CD8-positive, alpha-beta memory T cell (primary cell): ENCODE measurements at regions of chr3 and their contacts with region 1.

Region 1: DNA sequence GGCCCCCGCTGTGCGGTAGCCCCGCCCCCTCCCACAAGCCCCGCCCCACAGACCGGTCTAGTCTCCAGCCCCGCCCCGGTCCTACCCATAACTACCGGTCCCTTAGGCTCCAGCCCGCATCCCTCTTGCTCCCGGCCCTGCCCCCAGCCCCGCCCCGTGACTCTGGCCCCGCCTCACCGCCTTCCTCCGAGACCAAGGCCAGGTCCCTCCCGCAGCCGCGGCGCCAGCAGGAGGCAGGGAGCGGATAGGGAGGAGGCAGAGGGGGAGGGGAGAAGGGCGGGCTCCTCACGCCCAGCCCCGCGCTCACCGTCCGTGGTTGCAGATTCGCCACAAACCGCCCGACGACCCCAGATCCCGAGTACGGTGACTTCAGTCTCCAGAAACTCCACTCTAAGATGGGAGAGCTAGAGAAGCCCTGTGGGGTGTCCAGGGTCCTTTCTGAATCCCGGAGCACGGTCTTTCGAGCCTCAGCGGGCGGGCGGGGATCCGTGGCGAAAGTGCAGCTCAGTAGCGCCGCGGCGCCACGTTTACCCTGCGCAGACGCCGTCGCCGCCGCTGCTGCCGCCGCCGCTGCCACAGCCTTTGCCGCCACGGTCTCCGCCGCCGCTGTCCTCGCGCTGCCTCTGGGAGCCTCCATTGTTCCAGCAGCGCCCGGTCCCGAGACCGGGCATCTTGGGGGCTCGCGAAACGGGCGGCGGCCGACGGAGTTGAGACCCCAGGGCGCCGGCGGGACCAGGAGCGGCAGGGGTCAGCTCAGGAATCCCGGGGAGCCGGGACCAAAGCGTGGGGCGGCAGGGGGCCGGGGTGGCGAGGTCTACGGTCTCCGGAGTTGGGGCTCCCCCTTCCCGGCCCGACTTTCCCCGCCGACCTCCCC is at the start of gene BRPF1:
- DNase-seq: peak; percentile 96 to 100 (median 99)
- H3K4me3 ChIP-seq: peak within 1 kb of the TSS; percentile 80
- H3K4me3 Mint-ChIP-seq: peak within 1 kb of the TSS; percentile 87 to 98 (median 95)
- H3K27ac ChIP-seq: peak within 1 kb of the TSS; percentile 85
- H3K27ac Mint-ChIP-seq: peak within 1 kb of the TSS; percentile 80 to 99 (median 97)
- H3K4me1 ChIP-seq: peaks cover 42% of the 10 kb centered on the region
- H3K4me1 Mint-ChIP-seq: peaks cover 51 to 71% (median 65%) of the 10 kb centered on the region in 3 donors
- H3K27me3 ChIP-seq: no peaks in the 10 kb centered on the region
- H3K27me3 Mint-ChIP-seq: no peaks in the 10 kb centered on the region
- total RNA-seq, gene BRPF1: 46.8 to 50.2 TPM

Region 2: DNA sequence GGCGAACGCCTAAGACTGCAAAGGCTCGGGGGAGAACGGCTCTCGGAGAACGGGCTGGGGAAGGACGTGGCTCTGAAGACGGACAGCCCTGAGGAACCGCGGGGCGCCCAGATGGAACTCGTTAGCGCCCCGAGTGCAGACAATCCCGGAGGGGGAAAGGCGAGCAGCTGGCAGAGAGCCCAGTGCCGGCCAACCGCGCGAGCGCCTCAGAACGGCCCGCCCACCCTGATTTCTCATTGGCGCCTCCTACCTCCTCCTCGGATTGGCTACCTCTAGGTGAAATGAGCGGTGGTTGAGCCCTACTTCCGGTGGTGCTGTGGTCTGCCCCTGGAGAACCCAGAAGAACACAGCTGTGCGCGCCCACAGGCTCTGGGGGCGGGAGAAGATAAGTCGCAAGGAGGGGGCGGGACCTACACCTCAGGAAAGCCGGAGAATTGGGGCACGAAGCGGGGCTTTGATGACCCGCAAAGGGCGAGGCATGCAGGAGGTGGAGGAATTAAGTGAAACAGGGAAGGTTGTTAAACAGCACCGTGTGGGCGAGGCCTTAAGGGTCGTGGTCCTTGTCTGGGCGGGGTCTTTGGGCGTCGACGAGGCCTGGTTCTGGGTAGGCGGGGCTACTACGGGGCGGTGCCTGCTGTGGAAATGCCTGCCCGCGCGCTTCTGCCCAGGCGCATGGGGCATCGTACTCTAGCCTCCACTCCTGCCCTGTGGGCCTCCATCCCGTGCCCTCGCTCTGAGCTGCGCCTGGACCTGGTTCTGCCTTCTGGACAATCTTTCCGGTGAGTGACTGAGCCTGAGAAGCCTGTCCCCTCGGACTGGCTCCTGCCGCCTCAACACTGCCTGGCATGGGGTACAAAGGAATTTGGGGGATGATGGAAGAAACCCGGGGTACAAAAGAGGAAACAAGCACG is 18.5 kb after region 1 on chr3 and contains the start of gene OGG1:
- CTCF ChIA-PET with region 1: interaction called, 19 read pairs
- POLR2A ChIA-PET with region 1: interaction called, 23 read pairs
- DNase-seq: peak; percentile 93 to 97 (median 96)
- H3K4me3 ChIP-seq: peak within 1 kb of the TSS; percentile 95
- H3K4me3 Mint-ChIP-seq: peak within 1 kb of the TSS; percentile 91 to 97 (median 94)
- H3K27ac ChIP-seq: peak within 1 kb of the TSS; percentile 76
- H3K27ac Mint-ChIP-seq: peak within 1 kb of the TSS; percentile 83 to 98 (median 92)
- H3K4me1 ChIP-seq: peaks cover 30% of the 10 kb centered on the region
- H3K4me1 Mint-ChIP-seq: peaks cover 39 to 54% (median 46%) of the 10 kb centered on the region in 3 donors
- H3K27me3 ChIP-seq: no peaks in the 10 kb centered on the region
- H3K27me3 Mint-ChIP-seq: peaks cover 0 to 4% of the 10 kb centered on the region in 2 donors
- total RNA-seq, gene OGG1: 30.5 to 32.1 TPM